GM12878 (cell line): ENCODE measurements at regions of chr10 and their contacts with region 1.

Region 1: GRCh38 chr10:7525314-7526016 is 114.6 kb upstream of the SFMBT2 start:
- DNase-seq: peak; percentile 64
- ATAC-seq: peak; percentile 78
- H3K4me3 ChIP-seq: no peak overlapping the region
- H3K27ac ChIP-seq: no peak overlapping the region; the same call in 1 of the 2 replicates
- H3K4me1 ChIP-seq: peaks cover 13% of the 10 kb centered on the region
- H3K27me3 ChIP-seq: peaks cover 0 to 6% of the 10 kb centered on the region in 2 experiments; a peak in 1 of 4 replicates
- CTCF ChIP-seq: peak; percentile 69 to 93 (median 81)
- EP300 ChIP-seq: 0 out of 4 replicates have a peak, but pooled peaks of 1 of the 2 experiments have one; percentile 5
- POLR2A ChIP-seq: no peak
- RAD21 ChIP-seq: peak; percentile 95

Region 2: GRCh38 chr10:6778992-6779701 is 746.3 kb before region 1 on chr10:
- CTCF ChIA-PET with region 1: no interaction called
- POLR2A ChIA-PET with region 1: no interaction called
- RAD21 ChIA-PET with region 1: no interaction called
- SMC1A ChIA-PET with region 1: no interaction called
- in situ Hi-C with region 1: no loop called
- intact Hi-C with region 1: no loop called
- DNase-seq: no peak
- ATAC-seq: no peak
- H3K4me3 ChIP-seq: no peak overlapping the region
- H3K27ac ChIP-seq: no peak overlapping the region
- H3K4me1 ChIP-seq: peaks cover 16% of the 10 kb centered on the region
- H3K27me3 ChIP-seq: no peaks in the 10 kb centered on the region
- CTCF ChIP-seq: no peak
- EP300 ChIP-seq: no peak
- POLR2A ChIP-seq: no peak
- RAD21 ChIP-seq: no peak

Region 3: GRCh38 chr10:7233259-7234009 is 292.0 kb before region 1 on chr10:
- CTCF ChIA-PET with region 1: no interaction called
- POLR2A ChIA-PET with region 1: no interaction called
- RAD21 ChIA-PET with region 1: no interaction called
- SMC1A ChIA-PET with region 1: no interaction called
- in situ Hi-C with region 1: no loop called
- intact Hi-C with region 1: no loop called
- DNase-seq: no peak
- ATAC-seq: no peak
- H3K4me3 ChIP-seq: no peak overlapping the region
- H3K27ac ChIP-seq: no peak overlapping the region
- H3K4me1 ChIP-seq: no peaks in the 10 kb centered on the region
- H3K27me3 ChIP-seq: no peaks in the 10 kb centered on the region
- CTCF ChIP-seq: no peak
- EP300 ChIP-seq: no peak
- POLR2A ChIP-seq: no peak
- RAD21 ChIP-seq: no peak

Region 4: GRCh38 chr10:7424315-7424714 is 101.2 kb before region 1 on chr10:
- CTCF ChIA-PET with region 1: interaction called, 11 read pairs
- POLR2A ChIA-PET with region 1: no interaction called
- RAD21 ChIA-PET with region 1: interaction called, 10 read pairs
- SMC1A ChIA-PET with region 1: interaction called, 6 read pairs
- in situ Hi-C with region 1: no loop called
- intact Hi-C with region 1: no loop called
- DNase-seq: no peak
- ATAC-seq: no peak
- H3K4me3 ChIP-seq: no peak overlapping the region
- H3K27ac ChIP-seq: no peak overlapping the region
- H3K4me1 ChIP-seq: peaks cover 6% of the 10 kb centered on the region
- H3K27me3 ChIP-seq: no peaks in the 10 kb centered on the region
- CTCF ChIP-seq: no peak
- EP300 ChIP-seq: no peak
- POLR2A ChIP-seq: no peak
- RAD21 ChIP-seq: peak; percentile 28; the same call in 1 of the 2 replicates

Region 5: DNA sequence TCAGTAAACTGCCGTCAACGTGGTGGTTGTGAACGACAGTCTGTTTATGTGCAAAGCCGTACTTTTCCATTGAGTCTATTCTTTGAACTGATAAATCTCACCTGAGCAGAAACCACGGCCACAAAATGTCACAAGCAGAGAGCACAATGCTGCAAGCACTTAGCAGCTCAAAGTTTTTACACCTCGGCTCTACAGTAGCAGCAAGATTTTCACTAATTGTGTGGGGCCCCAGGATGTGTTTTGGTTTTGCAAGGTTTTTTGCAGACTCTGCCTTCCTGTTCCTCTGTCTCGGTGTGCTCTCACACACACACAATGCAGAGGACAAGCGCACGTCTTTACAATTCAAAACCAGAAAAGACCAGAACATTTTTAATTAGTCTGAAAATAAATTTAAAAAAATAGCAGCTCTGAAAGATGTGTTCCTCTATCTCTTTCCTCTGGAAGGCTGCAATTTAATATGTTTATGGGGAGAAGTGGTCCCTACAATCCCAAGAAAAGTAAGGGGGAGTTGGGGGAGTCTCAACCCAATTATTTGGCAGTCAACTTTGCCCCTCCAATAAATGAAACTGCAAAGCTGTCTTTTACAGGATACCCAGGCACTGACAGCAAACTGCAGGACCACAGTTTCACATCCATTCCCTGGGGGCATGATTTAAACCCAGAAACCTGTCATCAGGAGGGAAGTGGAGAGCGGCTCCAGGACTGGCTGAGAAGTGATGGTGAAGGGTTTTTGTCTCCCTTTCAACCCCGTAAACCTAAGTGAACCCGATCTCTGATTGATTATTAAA is 40.8 kb before region 1 on chr10:
- CTCF ChIA-PET with region 1: interaction called, 14 read pairs
- POLR2A ChIA-PET with region 1: interaction called, 5 read pairs
- RAD21 ChIA-PET with region 1: interaction called, 13 read pairs
- SMC1A ChIA-PET with region 1: interaction called, 41 read pairs
- in situ Hi-C with region 1: no loop called
- intact Hi-C with region 1: loop called (anchors 1 kb)
- DNase-seq: peak; percentile 91
- ATAC-seq: peak; percentile 81
- H3K4me3 ChIP-seq: peak overlapping the region; percentile 53
- H3K27ac ChIP-seq: peak overlapping the region; percentile 75
- H3K4me1 ChIP-seq: peaks cover 47% of the 10 kb centered on the region
- H3K27me3 ChIP-seq: no peaks in the 10 kb centered on the region
- CTCF ChIP-seq: no peak
- EP300 ChIP-seq: peak; percentile 78 to 96
- POLR2A ChIP-seq: peak; percentile 30; the same call in 1 of the 2 replicates
- RAD21 ChIP-seq: no peak

Region 6: DNA sequence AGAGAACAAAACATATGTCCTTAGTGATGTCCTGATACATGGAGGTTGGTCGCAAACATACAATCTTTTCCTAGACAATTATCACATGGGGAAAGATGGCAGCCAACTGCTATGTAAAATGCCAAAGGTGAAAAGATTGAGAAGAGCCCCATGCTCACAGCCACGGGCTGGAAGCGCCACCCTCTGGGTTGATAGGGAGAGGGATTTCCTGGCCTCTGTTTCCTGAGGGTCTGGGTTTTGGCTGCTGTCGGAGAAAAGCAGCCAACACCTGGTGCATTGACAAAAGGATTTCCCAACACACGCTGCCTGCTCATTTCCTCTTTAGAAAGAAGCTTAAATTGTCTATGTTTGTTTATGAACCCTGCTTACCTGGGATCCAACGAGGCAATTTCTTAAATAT is 97.5 kb after region 1 on chr10:
- CTCF ChIA-PET with region 1: interaction called, 39 read pairs
- POLR2A ChIA-PET with region 1: no interaction called
- RAD21 ChIA-PET with region 1: interaction called, 13 read pairs
- SMC1A ChIA-PET with region 1: interaction called, 13 read pairs
- in situ Hi-C with region 1: no loop called
- intact Hi-C with region 1: loop called (anchors 5 kb)
- DNase-seq: no peak
- ATAC-seq: peak; percentile 50
- H3K4me3 ChIP-seq: no peak overlapping the region
- H3K27ac ChIP-seq: no peak overlapping the region
- H3K4me1 ChIP-seq: no peaks in the 10 kb centered on the region; the same call in 1 of the 2 replicates
- H3K27me3 ChIP-seq: peaks cover 0 to 2% of the 10 kb centered on the region in 2 experiments; a peak in 1 of 4 replicates
- CTCF ChIP-seq: peak; percentile 13 to 50 (median 29); a peak in 4 of 6 replicates
- EP300 ChIP-seq: no peak
- POLR2A ChIP-seq: no peak
- RAD21 ChIP-seq: peak; percentile 51

Region 7: DNA sequence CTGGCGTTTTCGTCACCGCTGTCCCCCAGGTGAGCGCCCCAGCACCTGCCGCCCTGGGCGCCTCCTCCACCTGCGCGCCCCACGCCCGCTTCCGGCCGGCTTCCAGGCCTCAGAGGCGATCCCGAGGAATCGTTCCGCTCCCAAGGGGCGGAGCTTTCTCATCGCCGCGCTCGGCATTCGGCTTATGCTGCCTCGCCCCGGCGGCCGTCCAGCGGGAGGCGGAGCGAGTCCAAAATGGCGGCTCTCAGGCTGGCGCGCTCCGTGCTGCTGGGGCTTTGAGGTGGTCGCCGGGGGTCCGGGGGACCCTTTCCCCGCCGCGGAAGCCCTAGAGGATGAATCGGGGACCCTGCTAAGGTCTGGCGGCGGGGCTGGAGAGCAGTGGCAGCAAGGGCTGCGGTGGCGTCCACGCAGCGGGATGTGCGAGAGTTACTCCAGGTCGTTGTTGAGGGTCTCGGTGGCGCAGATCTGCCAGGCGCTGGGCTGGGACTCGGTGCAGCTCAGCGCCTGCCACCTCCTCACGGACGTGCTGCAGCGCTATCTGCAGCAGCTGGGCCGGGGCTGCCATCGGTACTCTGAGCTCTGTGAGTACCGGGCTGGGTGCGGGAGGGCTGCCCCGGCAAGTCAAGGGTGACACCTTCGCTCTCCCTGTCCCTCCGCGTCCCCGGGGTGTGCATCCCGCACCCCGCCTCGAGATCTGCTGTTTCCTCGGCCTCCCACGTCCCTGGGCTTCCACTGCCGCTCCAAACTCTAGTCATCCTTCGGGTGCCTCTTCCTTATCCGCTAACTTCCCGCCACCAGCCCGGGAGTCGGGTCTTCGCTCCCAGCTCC is 293.0 kb after region 1 on chr10 and contains the start of gene TAF3:
- CTCF ChIA-PET with region 1: interaction called, 30 read pairs
- POLR2A ChIA-PET with region 1: no interaction called
- RAD21 ChIA-PET with region 1: interaction called, 7 read pairs
- SMC1A ChIA-PET with region 1: interaction called, 9 read pairs
- in situ Hi-C with region 1: no loop called
- intact Hi-C with region 1: no loop called
- DNase-seq: peak; percentile 55
- ATAC-seq: peak; percentile 89
- H3K4me3 ChIP-seq: peak within 1 kb of the TSS; percentile 93
- H3K27ac ChIP-seq: peak within 1 kb of the TSS; percentile 75
- H3K4me1 ChIP-seq: no peaks in the 10 kb centered on the region
- H3K27me3 ChIP-seq: peaks cover 0 to 2% of the 10 kb centered on the region in 2 experiments; a peak in 1 of 4 replicates
- CTCF ChIP-seq: no peak
- EP300 ChIP-seq: no peak
- POLR2A ChIP-seq: peak; percentile 97
- RAD21 ChIP-seq: no peak
- polyA plus RNA-seq, gene TAF3: 2.0 to 3.0 TPM

Region 8: DNA sequence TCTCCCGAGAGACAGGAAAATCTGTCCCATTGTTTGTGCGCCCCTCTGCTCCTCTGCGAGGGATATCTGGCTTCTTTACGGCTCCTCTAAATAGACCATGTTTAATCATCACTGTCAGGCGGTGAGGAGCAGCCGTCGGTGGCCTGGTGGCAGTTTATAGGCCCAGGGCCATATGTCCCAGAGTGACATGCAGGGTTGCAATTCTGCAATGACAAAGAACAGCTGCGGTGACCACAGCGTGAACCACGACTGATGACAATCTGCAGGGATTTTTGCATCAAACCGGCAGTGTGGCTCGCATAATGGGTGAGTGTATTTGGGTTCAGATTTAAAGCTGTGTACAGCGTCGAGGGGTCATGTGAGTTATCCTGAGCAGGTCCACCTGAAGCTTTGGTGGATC is 570.5 kb after region 1 on chr10:
- CTCF ChIA-PET with region 1: no interaction called
- POLR2A ChIA-PET with region 1: no interaction called
- RAD21 ChIA-PET with region 1: no interaction called
- SMC1A ChIA-PET with region 1: no interaction called
- in situ Hi-C with region 1: no loop called
- intact Hi-C with region 1: no loop called
- DNase-seq: no peak
- ATAC-seq: no peak
- H3K4me3 ChIP-seq: no peak overlapping the region
- H3K27ac ChIP-seq: no peak overlapping the region
- H3K4me1 ChIP-seq: no peaks in the 10 kb centered on the region
- H3K27me3 ChIP-seq: no peaks in the 10 kb centered on the region; a peak in 1 of 4 replicates
- CTCF ChIP-seq: no peak
- EP300 ChIP-seq: no peak
- POLR2A ChIP-seq: no peak
- RAD21 ChIP-seq: no peak